Endothelial cell of umbilical vein (primary cell): ENCODE measurements at regions of chr5 and their contacts with region 1.

Region 1: GRCh38 chr5:131796793-131797693 is at the start of gene FNIP1:
- DNase-seq: peak; percentile 99
- H3K4me3 ChIP-seq: peak within 1 kb of the TSS; percentile 63 to 96 (median 69)
- H3K27ac ChIP-seq: peak within 1 kb of the TSS; percentile 94
- H3K4me1 ChIP-seq: peaks cover 16% of the 10 kb centered on the region
- H3K27me3 ChIP-seq: no peaks in the 10 kb centered on the region
- CTCF ChIP-seq: no peak
- POLR2A ChIP-seq: peak; percentile 78
- total RNA-seq, gene FNIP1: 25.6 and 27.3 TPM in 2 replicates

Region 2: GRCh38 chr5:131165119-131165727 is 631.8 kb before region 1 on chr5 and contains the start of gene HINT1:
- CTCF ChIA-PET with region 1: no interaction called
- POLR2A ChIA-PET with region 1: no interaction called
- dilution Hi-C with region 1: no loop called
- intact Hi-C with region 1: loop called (anchors 5 kb)
- DNase-seq: peak; percentile 91
- H3K4me3 ChIP-seq: peak within 1 kb of the TSS; percentile 79 to 100 (median 99)
- H3K27ac ChIP-seq: peak within 1 kb of the TSS; percentile 95
- H3K4me1 ChIP-seq: peaks cover 11% of the 10 kb centered on the region
- H3K27me3 ChIP-seq: no peaks in the 10 kb centered on the region
- CTCF ChIP-seq: peak in 1 of 2 donors; percentile 22
- POLR2A ChIP-seq: peak; percentile 75
- total RNA-seq, gene HINT1: 217 and 221 TPM in 2 replicates

Region 3: DNA sequence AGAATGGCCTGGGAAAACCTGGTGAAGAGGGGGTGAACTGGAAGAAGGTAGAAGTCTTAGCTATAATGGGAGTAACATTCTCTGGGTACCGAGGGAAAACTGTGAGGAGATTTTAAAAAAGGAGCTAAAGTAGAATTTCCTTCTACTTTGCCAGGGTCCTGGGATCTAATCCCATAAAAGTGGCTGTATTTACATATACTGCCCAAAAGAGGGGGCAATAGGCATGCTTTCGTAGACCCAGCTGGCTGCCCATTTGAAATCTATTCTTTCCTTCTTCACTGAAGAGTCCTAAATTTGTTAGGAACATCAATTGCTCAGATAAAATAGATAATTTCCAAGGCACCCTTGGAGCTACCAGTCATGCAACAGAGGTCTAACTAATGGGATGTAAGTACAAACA is 374.0 kb before region 1 on chr5:
- CTCF ChIA-PET with region 1: interaction called, 3 read pairs
- POLR2A ChIA-PET with region 1: no interaction called
- dilution Hi-C with region 1: no loop called
- intact Hi-C with region 1: loop called (anchors 5 kb)
- DNase-seq: peak; percentile 46
- H3K4me3 ChIP-seq: no peak overlapping the region
- H3K27ac ChIP-seq: no peak overlapping the region
- H3K4me1 ChIP-seq: no peaks in the 10 kb centered on the region
- H3K27me3 ChIP-seq: no peaks in the 10 kb centered on the region
- CTCF ChIP-seq: peak; percentile 47 to 56
- POLR2A ChIP-seq: no peak

Region 4: DNA sequence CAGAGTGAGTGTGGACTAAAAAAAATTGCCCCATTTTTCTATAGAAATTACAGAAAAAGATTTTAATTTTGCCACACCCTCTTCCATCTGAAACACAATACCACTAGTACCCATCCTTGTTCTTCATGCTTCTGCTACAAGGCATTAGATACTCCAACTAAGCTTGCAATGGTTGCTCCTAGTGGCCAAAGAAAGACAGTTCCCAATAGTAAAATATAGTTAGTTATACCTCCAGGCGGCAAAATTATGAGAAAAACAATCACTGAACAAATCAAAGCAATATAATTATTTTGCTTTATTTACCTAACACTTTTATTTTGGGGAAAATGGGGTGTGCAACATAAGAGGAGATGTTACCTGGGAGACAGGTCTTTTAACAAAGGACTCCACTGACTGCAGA is 263.2 kb before region 1 on chr5:
- CTCF ChIA-PET with region 1: no interaction called
- POLR2A ChIA-PET with region 1: no interaction called
- dilution Hi-C with region 1: no loop called
- intact Hi-C with region 1: loop called (anchors 5 kb)
- DNase-seq: no peak
- H3K4me3 ChIP-seq: no peak overlapping the region
- H3K27ac ChIP-seq: no peak overlapping the region
- H3K4me1 ChIP-seq: peaks cover 32% of the 10 kb centered on the region
- H3K27me3 ChIP-seq: no peaks in the 10 kb centered on the region
- CTCF ChIP-seq: peak; percentile 4 to 19
- POLR2A ChIP-seq: no peak

Region 5: GRCh38 chr5:131634996-131635754 is 161.9 kb before region 1 on chr5 and contains the start of gene RAPGEF6:
- CTCF ChIA-PET with region 1: no interaction called
- POLR2A ChIA-PET with region 1: no interaction called
- dilution Hi-C with region 1: no loop called
- intact Hi-C with region 1: loop called (anchors 1 kb)
- DNase-seq: peak; percentile 99
- H3K4me3 ChIP-seq: peak within 1 kb of the TSS; percentile 52 to 82 (median 56)
- H3K27ac ChIP-seq: peak within 1 kb of the TSS; percentile 95
- H3K4me1 ChIP-seq: peaks cover 16% of the 10 kb centered on the region
- H3K27me3 ChIP-seq: no peaks in the 10 kb centered on the region
- CTCF ChIP-seq: peak in 1 of 2 donors; percentile 3
- POLR2A ChIP-seq: peak; percentile 76
- total RNA-seq, gene RAPGEF6: 13.9 and 17.5 TPM in 2 replicates

Region 6: GRCh38 chr5:131810510-131811249 is 13.6 kb after region 1 on chr5:
- CTCF ChIA-PET with region 1: interaction called, 4 read pairs
- POLR2A ChIA-PET with region 1: interaction called, 6 read pairs
- dilution Hi-C with region 1: no loop called
- intact Hi-C with region 1: loop called (anchors 1 kb)
- DNase-seq: peak; percentile 27
- H3K4me3 ChIP-seq: no peak overlapping the region
- H3K27ac ChIP-seq: no peak overlapping the region
- H3K4me1 ChIP-seq: peaks cover 21% of the 10 kb centered on the region
- H3K27me3 ChIP-seq: no peaks in the 10 kb centered on the region
- CTCF ChIP-seq: peak; percentile 4 to 8
- POLR2A ChIP-seq: no peak

Region 7: GRCh38 chr5:131999441-132000240 is 202.6 kb after region 1 on chr5:
- CTCF ChIA-PET with region 1: no interaction called
- POLR2A ChIA-PET with region 1: no interaction called
- dilution Hi-C with region 1: no loop called
- intact Hi-C with region 1: loop called (anchors 5 kb)
- DNase-seq: no peak
- H3K4me3 ChIP-seq: no peak overlapping the region
- H3K27ac ChIP-seq: no peak overlapping the region
- H3K4me1 ChIP-seq: peaks cover 17% of the 10 kb centered on the region
- H3K27me3 ChIP-seq: no peaks in the 10 kb centered on the region
- CTCF ChIP-seq: no peak
- POLR2A ChIP-seq: no peak